Heart right ventricle (tissue), 16 donors: ENCODE measurements at regions of chr4 and their contacts with region 1.

Region 1: DNA sequence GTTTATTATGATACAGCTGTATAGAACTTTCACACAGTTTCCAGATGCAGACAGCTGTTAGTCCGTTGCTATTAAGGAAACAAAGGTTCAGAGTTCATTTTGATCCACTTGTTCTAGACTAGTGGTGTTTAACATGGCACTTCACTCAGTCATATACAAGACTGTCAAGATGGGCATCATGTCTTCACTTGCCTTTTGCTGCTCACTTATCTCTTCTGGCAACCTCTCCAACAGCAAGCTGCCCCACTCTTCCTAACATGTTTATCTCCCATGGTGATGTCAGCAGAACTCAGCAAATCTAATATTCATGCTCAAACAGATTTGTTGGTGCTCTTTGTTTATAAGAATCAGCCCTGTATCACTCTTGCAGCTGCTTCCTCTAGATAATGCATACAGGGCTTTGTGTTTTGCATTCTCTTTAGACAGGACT is 236.2 kb upstream of the HAND2 start:
- DNase-seq: no peak
- ATAC-seq: peak in 4 of 8 donors; percentile 14 to 36 (median 28)
- H3K4me3 ChIP-seq: no peak overlapping the region
- H3K27ac ChIP-seq: no peak overlapping the region
- H3K4me1 ChIP-seq: peaks cover 0 to 11% (median 0%) of the 10 kb centered on the region in 9 donors
- H3K27me3 ChIP-seq: no peaks in the 10 kb centered on the region
- CTCF ChIP-seq: no peak

Region 2: DNA sequence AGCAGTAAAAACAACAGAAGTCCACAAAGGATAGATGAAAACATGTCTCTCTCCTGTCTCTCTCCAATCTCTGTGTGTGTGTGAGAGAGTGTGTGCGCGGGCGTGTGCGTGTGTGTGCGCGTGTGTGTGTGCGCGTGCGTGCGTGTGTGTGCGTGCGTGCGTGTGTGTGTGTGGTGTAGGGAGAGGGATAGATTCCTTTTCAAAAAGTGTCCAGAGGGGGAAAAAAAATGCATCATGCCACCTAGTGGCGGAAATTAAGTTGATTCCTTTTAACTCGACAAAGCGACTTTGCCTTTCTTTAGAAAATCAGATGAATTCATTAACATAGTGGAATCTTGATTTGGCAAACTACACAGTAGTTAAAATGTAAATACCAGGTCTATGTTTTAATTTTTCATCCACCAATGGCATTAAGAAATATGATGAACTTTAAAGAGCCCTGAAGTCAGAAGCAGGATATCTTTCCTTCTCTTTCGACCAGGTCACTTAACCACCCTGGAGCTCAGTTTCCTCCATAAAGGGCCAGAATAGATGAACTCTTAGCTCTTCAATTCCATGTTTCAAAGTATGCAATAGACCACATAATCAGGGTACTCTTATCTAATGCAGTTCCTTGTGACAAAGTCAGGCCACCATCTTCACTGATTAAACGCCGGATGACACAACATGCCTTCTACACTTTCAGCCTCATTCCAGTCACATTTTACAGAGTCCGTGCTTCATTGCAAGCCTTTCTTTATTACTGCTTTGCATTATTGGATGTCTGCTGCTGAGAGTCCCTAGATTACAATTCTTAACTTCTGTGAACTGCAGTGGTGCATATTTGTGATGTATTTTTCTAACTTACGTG is 354.5 kb after region 1 on chr4:
- intact Hi-C with region 1: loop called in 1 of 10 experiments (anchors 10 kb)
- DNase-seq: peak; percentile 66 to 67
- ATAC-seq: peak; percentile 67 to 95 (median 83)
- H3K4me3 ChIP-seq: peak overlapping the region in 8 of 10 donors; percentile 17 to 54 (median 44)
- H3K27ac ChIP-seq: peak overlapping the region in 7 of 10 donors; percentile 5 to 65 (median 30)
- H3K4me1 ChIP-seq: peaks cover 0 to 31% (median 0%) of the 10 kb centered on the region in 9 donors
- H3K27me3 ChIP-seq: no peaks in the 10 kb centered on the region
- CTCF ChIP-seq: peak in 8 of 9 donors; percentile 22 to 60 (median 52)

Region 3: DNA sequence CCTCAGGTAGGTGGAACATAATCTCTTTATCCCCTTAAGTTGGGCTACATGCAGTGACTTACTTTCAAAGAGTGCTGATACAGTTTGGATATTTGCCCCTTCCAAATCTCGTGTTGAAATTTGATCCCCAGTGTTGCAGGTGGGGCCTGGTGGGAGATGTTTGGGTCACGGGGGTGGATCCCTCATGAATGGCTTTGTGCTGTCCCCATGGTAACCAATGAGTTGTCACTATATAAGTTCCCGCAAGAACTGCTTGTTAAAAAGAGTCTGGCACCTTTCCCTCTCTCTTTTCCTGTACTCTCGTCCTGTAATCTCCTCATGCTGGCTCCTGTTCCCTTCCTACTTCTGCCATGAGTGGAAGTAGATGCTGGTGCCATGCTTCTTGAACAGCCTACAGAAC is 991.5 kb after region 1 on chr4:
- intact Hi-C with region 1: loop called in 1 of 10 experiments (anchors 5 kb)
- DNase-seq: no peak
- ATAC-seq: no peak
- H3K4me3 ChIP-seq: no peak overlapping the region
- H3K27ac ChIP-seq: no peak overlapping the region
- H3K4me1 ChIP-seq: no peaks in the 10 kb centered on the region
- H3K27me3 ChIP-seq: no peaks in the 10 kb centered on the region
- CTCF ChIP-seq: no peak